ENCODE measurements at regions of chr3 and their contacts with region 1.

Region 1: GRCh38 chr3:68876112-68876713 is 56.1 kb downstream of the TAFA4 start:
- DNase-seq: no peak
- ATAC-seq: peak; percentile 47 to 53

Region 2: DNA sequence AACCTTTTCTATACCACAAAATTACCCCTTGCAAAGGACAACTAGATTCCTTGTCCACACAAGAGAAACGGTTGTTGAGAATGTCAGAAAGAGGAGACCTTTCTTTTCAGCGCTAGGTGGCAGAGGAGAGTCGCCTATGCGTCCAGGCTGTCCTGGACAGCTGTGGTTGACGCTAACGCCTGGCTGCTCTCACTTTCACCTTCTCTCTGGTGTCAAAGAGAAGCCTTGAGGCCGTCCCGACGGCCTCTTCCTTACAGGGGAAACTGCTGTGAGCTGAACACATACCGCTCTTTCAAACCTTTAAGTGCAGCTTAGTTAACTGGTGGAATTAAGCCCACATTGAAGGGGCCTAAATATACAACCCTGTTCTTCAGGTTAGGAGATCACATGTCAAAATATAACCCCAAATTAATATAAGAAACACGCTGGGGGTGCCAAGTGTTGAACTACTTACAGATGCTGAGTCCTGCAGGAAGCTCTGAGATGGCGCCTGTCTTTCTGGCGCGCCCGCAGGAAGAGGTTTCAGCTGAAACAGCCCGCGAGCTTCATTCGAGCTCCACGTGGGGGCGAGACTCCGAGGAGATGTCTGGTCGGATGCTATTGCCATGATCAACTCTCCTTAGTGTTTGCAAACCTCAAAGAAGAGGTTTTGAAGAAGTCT is 1904.2 kb before region 1 on chr3:
- intact Hi-C with region 1: loop called in 1 of 2 experiments (anchors 10 kb)
- DNase-seq: peak; percentile 72
- ATAC-seq: peak; percentile 97 to 98

Region 3: GRCh38 chr3:67113802-67114407 is 1762.3 kb before region 1 on chr3:
- intact Hi-C with region 1: loop called (anchors 5 to 10 kb)
- DNase-seq: peak; percentile 75
- ATAC-seq: peak; percentile 85 to 88

Region 4: GRCh38 chr3:67384760-67385397 is 1491.3 kb before region 1 on chr3:
- intact Hi-C with region 1: loop called in 1 of 2 experiments (anchors 5 kb)
- DNase-seq: peak; percentile 22
- ATAC-seq: peak; percentile 54 to 72

Measured in left cardiac atrium (tissue), 4 donors.